Caco-2 (cell line): ENCODE measurements at regions of chr2 and their contacts with region 1.

Region 1: DNA sequence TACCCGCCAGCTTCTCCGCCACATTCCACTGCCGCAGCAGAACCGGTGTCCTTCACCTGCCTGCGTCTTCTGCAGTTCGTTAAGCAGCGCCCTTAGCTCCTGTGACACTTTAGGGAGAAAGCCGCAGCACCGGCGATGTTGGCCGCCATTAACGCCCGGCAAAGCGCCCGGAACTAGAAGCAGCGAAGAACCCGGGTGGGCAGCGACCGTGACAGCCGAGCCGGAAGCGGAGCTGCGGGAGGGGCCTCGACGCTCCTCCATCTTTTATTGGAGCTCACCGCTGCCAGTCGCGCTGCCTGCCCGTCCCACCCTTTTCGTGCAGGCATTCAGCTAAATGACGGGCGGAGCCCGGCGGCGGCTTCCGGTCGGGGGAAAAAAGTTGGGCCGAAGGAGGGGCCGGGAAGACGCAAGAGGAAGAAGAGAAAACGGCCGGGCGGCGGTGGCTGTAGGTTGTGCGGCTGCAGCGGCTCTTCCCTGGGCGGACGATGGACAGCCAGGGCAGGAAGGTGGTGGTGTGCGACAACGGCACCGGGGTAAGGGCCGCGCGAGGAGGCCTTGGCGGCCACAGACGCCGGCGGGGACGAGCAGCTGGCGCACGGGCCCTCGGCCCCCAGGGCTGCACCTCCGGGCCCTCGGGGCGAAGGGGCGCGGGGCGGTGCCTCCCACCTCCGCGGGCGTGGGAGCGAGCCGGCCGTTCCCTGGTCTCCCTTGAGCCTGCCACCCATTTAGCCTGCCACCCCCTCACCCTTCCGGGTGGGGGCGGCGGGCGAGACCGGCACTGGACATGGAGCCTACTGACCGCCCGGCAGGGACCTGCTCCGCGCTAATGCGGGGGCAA is at the start of gene ACTR2:
- DNase-seq: peak; percentile 98
- H3K4me3 ChIP-seq: peak within 1 kb of the TSS; percentile 84
- H3K4me3 Mint-ChIP-seq: peak within 1 kb of the TSS; percentile 77
- H3K27ac Mint-ChIP-seq: peak within 1 kb of the TSS; percentile 86
- H3K4me1 ChIP-seq: peaks cover 15% of the 10 kb centered on the region
- H3K4me1 Mint-ChIP-seq: peaks cover 22% of the 10 kb centered on the region
- H3K27me3 ChIP-seq: no peaks in the 10 kb centered on the region
- H3K27me3 Mint-ChIP-seq: no peaks in the 10 kb centered on the region
- CTCF ChIP-seq: no peak
- total RNA-seq, gene ACTR2: 248 and 259 TPM in 2 replicates

Region 2: GRCh38 chr2:64653349-64654062 is 574.1 kb before region 1 on chr2 and contains the start of gene SERTAD2:
- CTCF ChIA-PET with region 1: no interaction called
- POLR2A ChIA-PET with region 1: interaction called, 3 read pairs
- intact Hi-C with region 1: loop called (anchors 10 kb)
- DNase-seq: peak; percentile 91 to 92
- H3K4me3 ChIP-seq: peak within 1 kb of the TSS; percentile 92
- H3K4me3 Mint-ChIP-seq: peak within 1 kb of the TSS; percentile 91
- H3K27ac Mint-ChIP-seq: peak within 1 kb of the TSS; percentile 82
- H3K4me1 ChIP-seq: peaks cover 34% of the 10 kb centered on the region
- H3K4me1 Mint-ChIP-seq: peaks cover 44% of the 10 kb centered on the region
- H3K27me3 ChIP-seq: no peaks in the 10 kb centered on the region
- H3K27me3 Mint-ChIP-seq: no peaks in the 10 kb centered on the region
- CTCF ChIP-seq: peak in 1 of 2 experiments; percentile 12
- total RNA-seq, gene SERTAD2: 25.1 and 25.8 TPM in 2 replicates

Region 3: GRCh38 chr2:65085148-65085547 is 142.5 kb before region 1 on chr2:
- CTCF ChIA-PET with region 1: interaction called, 5 read pairs
- POLR2A ChIA-PET with region 1: interaction called, 10 read pairs
- intact Hi-C with region 1: no loop called
- DNase-seq: no peak
- H3K4me3 ChIP-seq: no peak overlapping the region
- H3K4me3 Mint-ChIP-seq: no peak overlapping the region
- H3K27ac Mint-ChIP-seq: no peak overlapping the region
- H3K4me1 ChIP-seq: no peaks in the 10 kb centered on the region
- H3K4me1 Mint-ChIP-seq: peaks cover under 1% of the 10 kb centered on the region
- H3K27me3 ChIP-seq: no peaks in the 10 kb centered on the region
- H3K27me3 Mint-ChIP-seq: no peaks in the 10 kb centered on the region
- CTCF ChIP-seq: no peak

Region 4: DNA sequence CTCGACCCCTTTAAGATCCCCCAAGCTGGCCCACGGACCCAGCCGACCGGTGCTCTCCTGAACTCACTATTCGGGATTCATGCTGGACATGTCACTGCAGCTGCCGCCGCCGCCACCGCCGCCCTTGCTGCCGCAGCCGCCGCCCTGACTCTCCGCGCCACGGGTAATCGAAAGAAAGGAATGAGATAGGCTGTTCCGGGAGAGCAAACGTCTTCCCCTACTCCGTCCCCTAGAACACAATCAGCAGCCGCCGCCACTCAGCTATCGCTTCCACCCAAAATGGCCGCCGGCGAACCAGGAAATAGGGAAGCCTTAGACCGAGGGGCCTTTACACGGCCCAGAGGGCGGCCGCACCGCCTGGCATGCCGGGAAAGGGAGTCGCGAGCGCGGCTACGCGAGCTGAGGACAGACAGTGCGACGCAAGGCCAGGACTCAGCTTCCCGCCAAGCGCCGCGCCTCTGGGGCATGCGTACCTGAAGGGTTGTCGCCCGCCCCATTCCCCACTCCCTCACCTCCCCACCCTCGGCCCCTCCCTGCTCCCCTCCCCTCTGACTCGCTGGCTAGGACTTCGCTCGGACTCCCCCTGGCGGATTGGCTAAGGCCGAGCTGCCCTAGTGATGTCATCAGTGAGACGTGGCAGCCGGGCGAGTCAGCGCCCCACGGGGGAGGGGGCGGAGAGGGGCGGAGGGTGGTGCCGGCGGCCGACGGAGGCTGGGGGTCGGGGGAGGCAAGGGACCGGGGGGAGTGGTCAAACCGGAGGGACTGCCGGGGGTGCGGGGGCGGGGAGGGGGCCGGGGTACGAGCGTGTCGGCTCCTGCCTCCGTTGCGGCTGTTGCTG is 97.6 kb before region 1 on chr2 and contains the start of gene RAB1A:
- CTCF ChIA-PET with region 1: interaction called, 6 read pairs
- POLR2A ChIA-PET with region 1: interaction called, 83 read pairs
- intact Hi-C with region 1: loop called (anchors 2 kb)
- DNase-seq: peak; percentile 99 to 100
- H3K4me3 ChIP-seq: peak within 1 kb of the TSS; percentile 69
- H3K4me3 Mint-ChIP-seq: peak within 1 kb of the TSS; percentile 93
- H3K27ac Mint-ChIP-seq: peak within 1 kb of the TSS; percentile 97
- H3K4me1 ChIP-seq: peaks cover 43% of the 10 kb centered on the region
- H3K4me1 Mint-ChIP-seq: peaks cover 13% of the 10 kb centered on the region
- H3K27me3 ChIP-seq: no peaks in the 10 kb centered on the region
- H3K27me3 Mint-ChIP-seq: no peaks in the 10 kb centered on the region
- CTCF ChIP-seq: peak; percentile 38 to 61
- total RNA-seq, gene RAB1A: 193 and 207 TPM in 2 replicates

Region 5: GRCh38 chr2:65193446-65193845 is 34.2 kb before region 1 on chr2:
- CTCF ChIA-PET with region 1: no interaction called
- POLR2A ChIA-PET with region 1: interaction called, 10 read pairs
- intact Hi-C with region 1: no loop called
- DNase-seq: no peak
- H3K4me3 ChIP-seq: no peak overlapping the region
- H3K4me3 Mint-ChIP-seq: no peak overlapping the region
- H3K27ac Mint-ChIP-seq: no peak overlapping the region
- H3K4me1 ChIP-seq: no peaks in the 10 kb centered on the region
- H3K4me1 Mint-ChIP-seq: no peaks in the 10 kb centered on the region
- H3K27me3 ChIP-seq: no peaks in the 10 kb centered on the region
- H3K27me3 Mint-ChIP-seq: peaks cover 7% of the 10 kb centered on the region
- CTCF ChIP-seq: no peak

Region 6: DNA sequence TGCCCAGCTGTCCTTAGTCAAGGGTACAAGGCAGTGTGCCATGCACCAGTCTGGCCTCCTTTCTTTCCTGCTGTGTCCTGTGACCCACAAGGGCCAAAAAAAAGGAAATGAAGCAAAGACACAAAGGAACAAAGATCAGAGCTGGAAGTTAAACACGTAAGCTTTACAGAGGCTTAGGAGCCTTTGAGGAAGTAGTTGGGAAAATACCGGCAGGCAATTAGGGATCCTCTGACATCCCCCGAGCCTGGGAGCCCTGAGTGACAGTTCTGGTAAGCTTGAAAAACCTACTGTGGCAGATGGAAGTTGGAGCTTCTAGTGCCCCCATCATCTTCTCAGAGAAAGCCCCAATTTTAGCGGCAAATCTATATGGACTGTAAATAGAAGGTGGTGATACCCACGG is 126.3 kb after region 1 on chr2:
- CTCF ChIA-PET with region 1: no interaction called
- POLR2A ChIA-PET with region 1: interaction called, 13 read pairs
- intact Hi-C with region 1: no loop called
- DNase-seq: peak in 1 of 2 experiments; percentile 36
- H3K4me3 ChIP-seq: no peak overlapping the region
- H3K4me3 Mint-ChIP-seq: no peak overlapping the region
- H3K27ac Mint-ChIP-seq: no peak overlapping the region
- H3K4me1 ChIP-seq: peaks cover 50% of the 10 kb centered on the region
- H3K4me1 Mint-ChIP-seq: peaks cover 31% of the 10 kb centered on the region
- H3K27me3 ChIP-seq: no peaks in the 10 kb centered on the region
- H3K27me3 Mint-ChIP-seq: no peaks in the 10 kb centered on the region
- CTCF ChIP-seq: no peak